ENCODE measurements at regions of chr19 and their contacts with region 1.

Region 1: DNA sequence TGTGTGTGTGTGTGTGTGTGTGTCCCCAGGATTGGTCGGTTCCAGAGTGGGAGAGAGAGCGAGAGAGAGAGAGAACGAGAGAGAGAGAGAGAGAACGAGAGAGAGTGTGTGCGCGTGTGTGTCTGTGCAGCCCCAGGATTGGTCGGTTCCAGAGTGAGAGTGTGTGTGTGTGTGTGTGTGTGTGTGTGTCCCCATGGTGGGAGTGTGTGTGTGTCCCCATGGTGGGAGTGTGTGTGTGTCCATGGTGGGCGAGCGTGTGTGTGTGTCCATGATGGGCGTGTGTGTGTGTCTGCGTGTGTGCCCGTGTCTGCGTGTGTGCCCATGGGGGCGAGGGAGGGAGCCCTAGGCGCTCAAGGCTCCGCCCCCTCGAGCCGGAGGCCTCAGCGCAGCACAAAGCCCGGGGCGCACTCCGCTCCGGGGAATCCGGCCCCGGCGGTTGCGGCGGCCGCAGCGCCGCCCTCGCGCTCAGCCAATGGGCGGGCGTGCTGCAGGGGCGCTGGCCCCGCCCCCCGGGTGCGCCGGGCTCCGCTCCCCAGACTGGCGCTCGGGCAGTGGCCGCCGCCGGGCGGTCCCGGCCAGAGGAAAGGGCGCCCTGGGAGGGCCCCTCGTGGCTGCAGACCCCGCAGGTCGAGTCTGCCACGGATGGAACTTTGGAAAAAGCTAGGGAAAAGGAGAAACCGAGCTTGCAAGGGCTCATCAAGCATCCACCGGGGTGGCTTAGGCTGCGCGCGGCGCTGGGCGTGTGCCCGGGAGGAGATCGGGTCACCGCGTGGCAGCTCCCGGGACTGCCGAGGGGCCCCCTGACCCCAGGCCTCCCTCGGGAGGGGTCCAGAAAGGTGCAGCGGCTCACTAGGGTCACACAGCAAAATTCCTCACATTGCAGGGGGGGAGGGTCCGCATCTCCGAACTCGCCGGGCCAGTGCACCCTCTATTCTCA is 96.2 kb downstream of the INSR start:
- DNase-seq: peak; percentile 93
- H3K4me3 Mint-ChIP-seq: peak overlapping the region; percentile 71
- H3K27ac Mint-ChIP-seq: peak overlapping the region; percentile 84
- H3K4me1 Mint-ChIP-seq: peaks cover 13% of the 10 kb centered on the region
- H3K27me3 Mint-ChIP-seq: peaks cover 10% of the 10 kb centered on the region

Region 2: DNA sequence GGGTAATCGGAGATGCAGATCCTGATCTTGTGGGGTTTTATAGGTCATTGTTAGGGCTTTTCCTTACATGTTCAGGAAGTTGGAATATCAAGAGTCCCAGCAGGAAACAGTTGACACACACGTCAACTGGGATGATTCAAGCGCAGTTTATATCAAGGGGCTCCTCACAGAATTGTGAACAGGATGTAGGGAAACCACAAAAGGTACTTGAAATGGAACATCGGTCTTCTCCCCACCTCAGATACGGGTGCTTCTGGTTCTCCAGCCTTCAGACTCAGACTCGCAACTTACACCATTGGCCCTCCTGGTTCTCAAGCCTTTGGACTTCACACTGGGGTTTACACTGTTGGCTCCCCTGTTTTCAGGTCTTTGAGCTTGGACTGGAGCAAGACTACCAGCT is 109.0 kb before region 1 on chr19:
- CTCF ChIA-PET with region 1: no interaction called
- POLR2A ChIA-PET with region 1: no interaction called
- intact Hi-C with region 1: no loop called
- DNase-seq: no peak
- H3K4me3 Mint-ChIP-seq: no peak overlapping the region
- H3K27ac Mint-ChIP-seq: no peak overlapping the region
- H3K4me1 Mint-ChIP-seq: no peaks in the 10 kb centered on the region
- H3K27me3 Mint-ChIP-seq: no peaks in the 10 kb centered on the region

Region 3: DNA sequence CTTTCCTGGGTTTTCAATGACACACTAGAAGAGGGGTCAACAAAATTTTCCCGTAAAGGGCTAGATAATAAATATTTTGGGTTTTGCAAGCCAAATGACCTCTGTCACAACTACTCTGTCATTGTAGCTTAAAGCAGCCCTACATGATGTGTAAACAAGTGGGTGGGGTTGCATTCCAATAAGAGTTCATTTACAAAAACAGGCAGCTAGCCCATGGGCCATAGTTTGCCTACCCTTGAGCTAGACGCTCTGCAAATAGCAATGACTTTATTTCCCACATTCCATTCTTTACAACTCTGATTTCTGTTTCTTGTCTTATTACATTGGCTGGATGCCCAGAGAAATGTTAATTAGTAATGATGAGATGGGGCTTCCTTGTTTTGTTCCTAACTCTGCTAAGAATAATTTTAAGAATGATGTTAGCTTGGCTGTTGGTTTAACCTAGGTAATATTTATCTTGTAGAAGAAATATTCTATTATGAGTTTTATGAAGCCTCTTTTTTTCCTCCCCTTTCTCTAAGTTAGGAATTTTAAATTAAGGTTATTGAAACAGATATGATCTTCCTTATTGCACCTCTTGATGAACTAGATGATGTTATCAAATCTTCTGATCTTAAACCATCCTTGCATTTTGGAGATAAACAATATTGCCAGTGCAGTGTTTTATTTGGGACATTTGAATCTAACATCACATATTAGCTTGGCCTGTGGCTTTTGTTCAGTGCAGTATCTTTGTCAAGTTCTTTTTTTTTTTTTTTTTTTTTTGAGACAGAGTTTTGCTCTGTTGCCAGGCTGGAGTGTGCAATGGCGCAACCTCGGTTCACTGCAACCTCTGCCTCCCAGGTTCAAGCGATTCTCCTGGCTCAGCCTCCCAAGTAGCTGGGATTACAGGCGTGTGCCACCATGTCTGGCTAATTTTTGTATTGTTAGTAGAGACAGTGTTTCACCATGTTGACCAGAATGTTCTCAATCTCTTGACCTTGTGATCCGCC is 52.2 kb before region 1 on chr19:
- CTCF ChIA-PET with region 1: no interaction called
- POLR2A ChIA-PET with region 1: no interaction called
- intact Hi-C with region 1: loop called (anchors 5 kb)
- DNase-seq: no peak
- H3K4me3 Mint-ChIP-seq: no peak overlapping the region
- H3K27ac Mint-ChIP-seq: no peak overlapping the region
- H3K4me1 Mint-ChIP-seq: no peaks in the 10 kb centered on the region
- H3K27me3 Mint-ChIP-seq: no peaks in the 10 kb centered on the region

Region 4: GRCh38 chr19:7211204-7211951 is 13.3 kb after region 1 on chr19:
- CTCF ChIA-PET with region 1: no interaction called
- POLR2A ChIA-PET with region 1: interaction called, 3 read pairs
- intact Hi-C with region 1: loop called (anchors 2 kb)
- DNase-seq: no peak
- H3K4me3 Mint-ChIP-seq: no peak overlapping the region
- H3K27ac Mint-ChIP-seq: no peak overlapping the region
- H3K4me1 Mint-ChIP-seq: peaks cover 45% of the 10 kb centered on the region
- H3K27me3 Mint-ChIP-seq: peaks cover 7% of the 10 kb centered on the region

Region 5: DNA sequence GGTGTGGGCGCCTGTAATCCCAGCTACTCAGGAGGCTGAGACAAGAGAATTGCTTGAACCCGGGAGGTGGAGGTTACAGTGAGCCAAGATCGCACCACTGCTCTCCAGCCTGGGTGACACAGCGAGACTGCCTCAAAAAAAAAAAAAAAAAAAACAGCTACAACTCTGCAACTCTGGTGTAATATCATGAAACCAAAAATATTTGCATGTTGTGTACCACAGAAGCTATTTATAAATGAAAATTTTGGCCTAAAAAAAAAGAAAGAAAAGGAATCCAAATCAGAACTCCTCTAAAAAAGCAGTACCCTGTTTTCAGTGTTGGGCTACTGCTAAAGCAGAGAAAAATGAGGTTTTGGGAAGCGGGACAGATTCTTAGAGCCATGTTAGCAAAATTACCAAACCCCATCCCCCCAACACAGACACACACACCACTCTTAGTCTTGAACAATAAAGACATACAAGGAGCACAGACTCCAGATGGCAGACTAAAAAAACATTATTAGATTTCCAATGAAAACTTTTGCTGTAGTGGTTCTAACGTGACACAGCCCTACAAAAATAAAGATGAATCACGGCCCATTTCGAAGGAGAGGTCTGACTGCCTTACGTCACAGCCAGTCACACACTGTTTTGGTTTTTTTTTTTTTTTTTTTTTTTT is 44.7 kb after region 1 on chr19:
- CTCF ChIA-PET with region 1: no interaction called
- POLR2A ChIA-PET with region 1: no interaction called
- intact Hi-C with region 1: no loop called
- DNase-seq: no peak
- H3K4me3 Mint-ChIP-seq: no peak overlapping the region
- H3K27ac Mint-ChIP-seq: no peak overlapping the region
- H3K4me1 Mint-ChIP-seq: no peaks in the 10 kb centered on the region
- H3K27me3 Mint-ChIP-seq: no peaks in the 10 kb centered on the region

Region 6: DNA sequence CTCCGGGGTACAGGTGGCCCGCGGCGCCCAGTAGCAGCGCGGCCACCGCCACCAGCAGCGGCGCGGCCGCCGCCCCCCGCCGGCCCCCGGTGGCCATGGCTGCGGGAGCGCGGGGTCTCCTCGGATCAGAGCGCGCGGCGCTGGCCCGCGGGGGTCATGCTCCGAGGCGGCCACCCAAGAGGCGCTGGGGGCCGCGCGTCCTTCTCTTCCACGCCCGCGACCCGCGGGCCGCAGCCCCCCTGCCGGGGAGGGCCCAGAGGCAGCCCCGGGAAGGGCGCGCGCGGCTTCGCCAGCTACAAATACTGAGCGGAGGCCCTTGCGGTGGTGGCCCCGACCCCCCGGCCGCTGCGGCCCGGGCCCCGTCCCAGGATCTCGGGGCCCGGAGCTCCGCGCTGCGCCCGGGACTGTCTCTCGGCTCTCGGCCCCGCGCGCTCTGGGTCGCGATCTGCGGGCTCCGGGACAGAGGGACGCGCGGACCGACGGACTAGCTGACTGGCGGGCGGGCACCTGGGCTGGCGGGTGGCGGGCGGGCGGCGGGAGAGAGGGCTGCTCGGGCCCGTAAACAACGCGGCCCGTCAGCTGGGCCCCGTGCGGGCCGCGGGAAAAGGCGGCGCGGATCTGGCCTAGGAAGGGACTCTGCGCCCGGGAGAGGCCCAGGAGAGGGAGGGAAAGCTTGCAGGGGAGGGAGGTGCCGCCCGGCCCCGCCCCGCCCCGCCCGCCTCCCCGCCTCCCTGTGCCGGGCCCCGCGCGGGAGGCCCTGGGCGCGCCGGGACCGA is 96.0 kb after region 1 on chr19 and contains the start of gene INSR:
- CTCF ChIA-PET with region 1: no interaction called
- POLR2A ChIA-PET with region 1: interaction called, 3 read pairs
- intact Hi-C with region 1: loop called (anchors 2 kb)
- DNase-seq: peak; percentile 79
- H3K4me3 Mint-ChIP-seq: peak within 1 kb of the TSS; percentile 70
- H3K27ac Mint-ChIP-seq: no peak within 1 kb of the TSS
- H3K4me1 Mint-ChIP-seq: peaks cover 6% of the 10 kb centered on the region
- H3K27me3 Mint-ChIP-seq: peaks cover 41% of the 10 kb centered on the region
- total RNA-seq, gene INSR: 2.9 to 3.3 TPM

Region 7: DNA sequence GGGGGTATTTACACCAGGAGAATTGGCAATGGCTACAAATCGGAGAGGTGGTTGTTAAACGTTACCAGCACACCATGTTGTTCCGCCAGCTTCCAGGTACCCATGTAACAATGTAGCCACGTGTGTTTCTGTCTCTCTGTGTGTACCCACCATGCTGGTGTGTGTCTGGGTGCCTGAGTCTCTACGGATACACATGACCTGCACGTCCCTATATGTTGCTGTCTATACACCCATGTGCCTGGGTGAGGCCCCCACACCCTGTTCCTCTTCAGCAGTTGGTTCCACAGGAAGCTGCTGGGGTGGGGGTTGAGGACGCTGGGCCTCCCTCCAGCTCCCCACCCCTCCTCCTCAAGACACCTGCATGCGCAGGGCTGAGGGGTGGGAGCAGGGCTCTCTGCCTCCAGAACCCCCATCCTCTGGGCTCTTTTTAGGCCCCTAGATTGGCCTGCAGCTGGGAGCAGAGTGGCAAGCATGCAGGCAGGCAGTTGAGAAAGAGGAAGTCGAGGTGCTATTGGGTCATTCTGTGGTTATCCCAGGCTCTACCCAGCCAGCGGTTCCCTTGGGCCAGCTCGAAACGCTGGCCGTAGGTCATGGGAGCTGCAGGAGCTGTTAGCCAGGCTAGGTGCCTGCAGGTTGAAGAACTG is 150.7 kb after region 1 on chr19 and contains the start of gene ARHGEF18:
- CTCF ChIA-PET with region 1: no interaction called
- POLR2A ChIA-PET with region 1: no interaction called
- intact Hi-C with region 1: loop called (anchors 5 kb)
- DNase-seq: peak; percentile 66
- H3K4me3 Mint-ChIP-seq: peak within 1 kb of the TSS; percentile 79
- H3K27ac Mint-ChIP-seq: peak within 1 kb of the TSS; percentile 94
- H3K4me1 Mint-ChIP-seq: peaks cover 53% of the 10 kb centered on the region
- H3K27me3 Mint-ChIP-seq: no peaks in the 10 kb centered on the region
- total RNA-seq, gene ARHGEF18: 36.9 to 37.1 TPM

Measured in activated CD4-positive, alpha-beta memory T cell treated with anti-CD3 and anti-CD28 coated beads for 36 hours (primary cell).